ENCODE measurements at regions of chr5 and their contacts with region 1.

Region 1: DNA sequence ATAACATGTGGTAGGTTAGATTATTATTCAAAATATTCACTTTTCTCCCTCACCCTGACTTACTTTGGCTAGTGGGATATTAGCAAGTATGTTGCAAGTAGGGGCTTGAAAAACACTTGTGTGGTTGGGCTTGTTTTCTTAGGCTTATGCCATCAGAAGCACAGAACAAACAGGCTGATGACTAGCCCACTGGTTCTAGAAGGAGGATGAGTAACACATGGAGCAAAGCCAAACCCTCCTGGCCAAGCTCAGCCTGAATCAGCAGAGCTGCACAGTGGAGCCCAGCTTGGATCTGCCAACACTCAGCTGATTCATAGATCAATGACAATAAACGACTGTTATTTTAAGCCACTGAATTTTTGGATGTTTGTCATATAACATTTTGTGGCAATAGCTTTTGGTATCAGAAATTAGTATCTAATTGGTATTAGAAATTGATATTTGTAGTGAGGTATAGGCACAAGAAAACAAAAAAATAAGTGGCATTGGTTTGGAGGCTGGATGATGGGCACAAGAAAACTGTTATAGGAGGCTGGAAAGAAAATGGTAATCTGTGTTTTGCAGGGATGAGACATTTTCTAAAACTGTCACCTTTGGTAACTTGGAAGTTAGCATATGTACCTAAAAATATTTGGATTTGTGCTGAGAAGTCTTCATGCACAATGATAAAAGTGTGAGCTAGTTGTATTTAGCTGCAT is 46.1 kb upstream of the ZBED3 start:
- DNase-seq: peak; percentile 75
- H3K4me3 ChIP-seq: no peak overlapping the region
- H3K27ac ChIP-seq: no peak overlapping the region
- H3K4me1 ChIP-seq: no peaks in the 10 kb centered on the region
- H3K27me3 ChIP-seq: no peaks in the 10 kb centered on the region
- CTCF ChIP-seq: no peak
- POLR2A ChIP-seq: no peak

Region 2: DNA sequence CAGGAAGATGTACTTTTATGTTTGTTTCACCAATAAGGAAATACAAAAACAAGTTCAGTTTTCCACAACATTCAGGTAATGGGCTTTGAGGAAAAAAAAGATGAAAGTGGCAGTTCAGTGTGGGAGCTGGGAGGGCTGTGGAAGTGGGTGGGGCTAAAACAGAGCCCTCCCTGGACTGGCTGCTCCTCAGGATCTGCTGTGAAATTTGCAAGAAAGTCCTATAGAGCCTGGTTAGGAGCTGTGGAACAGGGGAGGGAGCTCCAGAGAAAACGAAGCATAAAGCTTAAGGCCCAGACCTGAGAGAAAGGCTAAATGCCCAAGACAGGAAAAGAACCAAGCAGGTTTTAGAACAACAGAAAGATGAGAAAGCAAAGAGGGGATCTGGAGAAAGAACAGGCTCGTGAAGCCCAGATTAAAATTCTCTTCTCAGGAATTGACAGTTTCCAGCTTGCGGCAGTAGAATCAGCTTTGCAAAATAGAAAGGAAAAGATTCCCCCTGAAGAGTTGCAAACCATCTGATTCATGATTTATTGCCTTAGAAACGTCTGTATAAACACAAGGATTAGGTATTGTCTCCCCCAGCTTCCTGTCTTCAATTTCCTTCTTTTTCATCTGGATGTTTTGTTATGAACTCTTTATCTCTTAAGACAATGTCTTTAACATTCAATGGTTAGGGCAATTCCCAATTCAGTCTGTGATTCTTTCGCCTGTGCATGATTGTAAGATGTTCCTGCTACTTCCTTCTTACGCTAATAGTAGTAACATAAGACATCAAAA is 206.7 kb before region 1 on chr5:
- intact Hi-C with region 1: no loop called
- DNase-seq: no peak
- H3K4me3 ChIP-seq: no peak overlapping the region
- H3K27ac ChIP-seq: no peak overlapping the region
- H3K4me1 ChIP-seq: no peaks in the 10 kb centered on the region
- H3K27me3 ChIP-seq: no peaks in the 10 kb centered on the region
- CTCF ChIP-seq: no peak
- POLR2A ChIP-seq: no peak

Region 3: DNA sequence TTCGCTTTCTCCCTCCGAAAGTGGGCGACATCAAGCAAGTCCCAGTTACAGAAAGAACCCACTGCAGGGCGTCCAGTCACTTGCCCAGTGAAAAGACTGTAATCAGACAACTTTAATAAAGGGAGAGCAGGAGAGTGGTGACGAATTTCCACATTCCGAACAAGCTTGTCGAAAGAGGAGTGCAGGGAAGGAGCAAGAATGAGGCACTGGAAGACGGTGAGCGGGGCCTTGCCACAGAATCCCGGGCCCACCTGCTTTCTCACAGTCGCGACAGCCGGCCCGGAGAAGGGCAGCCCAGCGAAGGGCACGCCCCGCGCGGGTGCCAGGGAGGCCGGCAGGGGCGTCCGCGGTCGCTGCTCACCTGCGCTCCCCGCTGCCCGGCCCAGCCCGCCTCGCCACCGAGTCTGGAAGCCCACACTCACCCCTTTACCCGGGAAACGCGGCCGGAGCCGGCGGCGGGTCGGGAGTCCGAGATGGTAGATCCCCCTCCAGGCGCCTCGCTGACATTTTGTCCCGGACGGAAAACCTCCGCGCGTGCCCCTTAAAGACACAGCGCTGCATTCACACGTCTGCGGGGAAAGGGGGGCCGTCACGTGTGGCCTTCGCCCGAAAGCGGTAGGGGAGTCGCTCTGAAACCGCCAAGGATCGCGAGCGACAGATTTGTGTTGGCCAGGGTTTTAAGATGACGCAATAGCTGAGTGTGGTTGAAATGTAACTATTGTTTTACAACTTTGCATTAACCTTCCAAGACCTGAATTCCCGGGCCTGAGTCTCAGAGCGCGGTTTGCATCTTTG is 46.3 kb before region 1 on chr5 and contains the start of gene ZBED3:
- intact Hi-C with region 1: loop called (anchors 10 kb)
- DNase-seq: peak; percentile 71
- H3K4me3 ChIP-seq: peak within 1 kb of the TSS; percentile 72 to 80
- H3K27ac ChIP-seq: peak within 1 kb of the TSS; percentile 94 to 96
- H3K4me1 ChIP-seq: no peaks in the 10 kb centered on the region
- H3K27me3 ChIP-seq: no peaks in the 10 kb centered on the region
- CTCF ChIP-seq: peak in 1 of 4 experiments; percentile 33
- POLR2A ChIP-seq: peak; percentile 6
- total RNA-seq, gene ZBED3: 11.9 to 25.3 TPM

Region 4: DNA sequence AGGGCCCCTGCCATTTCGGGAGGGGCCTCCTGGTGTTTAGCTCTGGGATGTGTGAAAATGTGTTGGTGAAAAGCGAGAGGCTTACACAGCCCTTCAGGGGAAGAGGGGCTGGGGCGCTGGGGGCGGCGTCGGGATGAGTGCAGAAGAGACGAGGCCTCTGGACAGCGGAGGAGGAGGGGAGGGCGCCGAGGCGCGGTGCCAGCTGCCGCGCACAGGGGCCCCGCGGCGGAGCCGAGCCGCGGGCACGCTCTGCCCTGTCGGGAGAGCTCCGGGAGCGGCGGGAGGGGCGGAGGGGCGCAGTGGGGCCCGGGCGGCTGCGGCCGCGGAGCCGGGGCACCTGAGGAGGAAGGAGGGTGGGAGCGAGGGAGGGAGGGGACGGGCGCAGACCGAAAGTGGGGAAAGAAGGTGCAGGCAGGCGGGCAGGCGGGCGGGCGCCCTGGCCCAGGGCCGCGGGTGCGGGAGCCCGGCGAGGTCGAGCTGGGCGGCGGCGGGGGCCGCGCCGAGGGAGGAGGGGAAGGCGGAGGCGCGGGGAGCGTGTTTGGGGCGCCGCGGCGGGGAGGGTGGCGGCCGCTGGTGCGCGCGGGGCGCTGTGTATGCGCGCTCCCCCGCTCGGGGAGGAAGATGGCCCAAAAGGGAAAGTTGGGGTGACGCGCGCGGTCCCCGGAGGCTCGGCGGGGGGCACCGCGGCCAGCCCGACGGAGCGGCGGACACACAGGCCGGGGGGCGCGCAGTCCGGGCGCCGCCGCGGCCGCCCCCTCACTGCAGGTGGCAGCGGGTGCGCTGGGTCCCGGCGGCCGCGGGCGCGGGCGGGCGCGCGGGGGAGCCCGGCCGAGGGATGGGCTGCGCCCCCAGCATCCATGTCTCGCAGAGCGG is 77.1 kb after region 1 on chr5 and contains the start of gene PDE8B:
- intact Hi-C with region 1: no loop called
- DNase-seq: peak; percentile 15
- H3K4me3 ChIP-seq: peak within 1 kb of the TSS; percentile 62 to 66
- H3K27ac ChIP-seq: peak within 1 kb of the TSS; percentile 63 to 80
- H3K4me1 ChIP-seq: no peaks in the 10 kb centered on the region
- H3K27me3 ChIP-seq: no peaks in the 10 kb centered on the region
- CTCF ChIP-seq: no peak
- POLR2A ChIP-seq: no peak
- total RNA-seq, gene PDE8B: 25.6 to 66.0 TPM

Region 5: DNA sequence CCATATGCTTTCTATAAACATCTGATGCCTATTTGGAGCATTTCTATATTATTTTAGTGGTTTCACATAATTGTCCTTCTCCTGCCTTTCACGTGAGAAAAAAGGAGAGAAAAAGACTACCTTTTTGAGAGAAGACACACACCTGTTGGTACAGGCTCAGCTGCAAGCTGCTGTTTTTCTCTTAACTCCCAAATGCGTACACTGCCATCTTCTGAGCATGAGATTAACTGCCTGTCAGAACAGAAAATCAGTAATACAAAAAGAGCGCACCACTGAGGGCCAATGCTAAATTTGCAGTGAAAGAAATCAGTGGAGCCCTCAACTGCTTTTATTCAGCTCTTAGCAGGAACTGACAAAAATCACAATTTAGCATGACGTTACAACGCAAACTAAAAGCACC is 304.0 kb after region 1 on chr5:
- intact Hi-C with region 1: loop called (anchors 10 kb)
- DNase-seq: no peak
- H3K4me3 ChIP-seq: no peak overlapping the region
- H3K27ac ChIP-seq: no peak overlapping the region
- H3K4me1 ChIP-seq: no peaks in the 10 kb centered on the region
- H3K27me3 ChIP-seq: no peaks in the 10 kb centered on the region
- CTCF ChIP-seq: peak in 2 of 4 experiments; percentile 21 to 39
- POLR2A ChIP-seq: no peak